Activated CD4-positive, alpha-beta memory T cell treated with anti-CD3 and anti-CD28 coated beads for 36 hours (primary cell): ENCODE measurements at regions of chr4 and their contacts with region 1.

Region 1: DNA sequence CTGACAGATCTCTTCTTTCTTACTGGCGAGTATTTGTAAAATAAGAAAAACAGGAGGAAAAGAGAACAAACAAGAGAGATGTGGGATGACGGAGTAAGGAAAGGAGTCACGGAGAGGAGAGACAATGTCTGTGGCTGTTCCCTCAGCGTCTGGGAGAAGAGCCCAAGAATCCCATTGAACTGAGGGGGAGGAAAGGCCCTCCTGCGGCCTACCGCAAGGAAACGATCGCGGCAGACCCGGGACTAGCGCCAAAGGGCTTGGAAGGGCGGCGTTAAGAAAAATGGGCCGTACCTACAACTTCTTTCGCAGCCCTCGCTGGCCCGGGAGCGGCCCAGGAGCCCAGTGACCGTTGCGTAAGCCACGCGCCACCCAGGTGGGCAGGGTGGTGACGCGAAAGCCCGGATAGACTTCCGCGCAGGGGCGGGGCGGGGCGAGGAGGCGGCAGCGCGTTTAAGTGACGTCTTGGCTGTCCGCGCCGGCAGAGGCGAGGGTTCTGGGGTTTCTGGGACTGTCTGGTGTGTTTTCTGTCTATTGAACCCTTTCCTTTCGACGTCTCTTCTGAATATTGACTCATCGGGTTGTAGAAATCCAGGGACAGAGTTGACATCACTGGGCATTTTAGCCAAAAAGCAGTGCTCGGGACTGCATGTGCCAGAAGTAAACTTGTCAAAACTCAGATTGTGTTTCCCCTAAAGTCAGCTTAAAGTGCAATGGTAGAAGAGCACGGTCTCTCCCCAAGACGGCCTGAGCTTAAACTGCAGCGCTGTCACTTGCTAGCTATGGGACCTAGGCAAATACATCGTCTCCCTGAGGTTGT is at the start of gene SLC9B1:
- DNase-seq: peak; percentile 97
- H3K4me3 Mint-ChIP-seq: peak within 1 kb of the TSS; percentile 84
- H3K27ac Mint-ChIP-seq: peak within 1 kb of the TSS; percentile 92
- H3K4me1 Mint-ChIP-seq: peaks cover 15% of the 10 kb centered on the region
- H3K27me3 Mint-ChIP-seq: no peaks in the 10 kb centered on the region
- total RNA-seq, gene SLC9B1: 1.9 to 2.4 TPM

Region 2: GRCh38 chr4:102180046-102180445 is 839.5 kb before region 1 on chr4:
- CTCF ChIA-PET with region 1: no interaction called
- POLR2A ChIA-PET with region 1: no interaction called
- intact Hi-C with region 1: no loop called
- DNase-seq: no peak
- H3K4me3 Mint-ChIP-seq: no peak overlapping the region
- H3K27ac Mint-ChIP-seq: no peak overlapping the region
- H3K4me1 Mint-ChIP-seq: no peaks in the 10 kb centered on the region
- H3K27me3 Mint-ChIP-seq: no peaks in the 10 kb centered on the region

Region 3: DNA sequence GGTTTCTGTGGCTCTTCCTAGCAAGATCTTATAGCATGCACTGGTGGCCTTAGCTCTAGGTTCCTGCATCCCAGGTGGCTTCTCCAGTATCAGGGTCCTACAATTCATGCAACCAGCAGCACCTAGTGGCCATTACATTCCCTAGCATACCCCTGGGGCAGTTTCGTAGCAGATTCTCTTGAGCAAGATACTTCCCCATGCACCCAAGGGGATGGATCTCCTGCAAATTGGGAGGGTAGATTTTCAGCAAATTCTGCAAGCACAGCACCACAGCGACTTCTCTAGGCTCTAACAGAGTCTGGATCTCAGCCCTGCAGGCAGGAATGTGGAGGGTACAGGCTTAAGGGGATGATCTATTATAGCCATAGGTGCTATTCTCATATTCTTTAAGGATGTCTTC is 13.1 kb after region 1 on chr4:
- CTCF ChIA-PET with region 1: no interaction called
- POLR2A ChIA-PET with region 1: no interaction called
- intact Hi-C with region 1: no loop called
- DNase-seq: no peak
- H3K4me3 Mint-ChIP-seq: no peak overlapping the region
- H3K27ac Mint-ChIP-seq: no peak overlapping the region
- H3K4me1 Mint-ChIP-seq: no peaks in the 10 kb centered on the region
- H3K27me3 Mint-ChIP-seq: no peaks in the 10 kb centered on the region

Region 4: DNA sequence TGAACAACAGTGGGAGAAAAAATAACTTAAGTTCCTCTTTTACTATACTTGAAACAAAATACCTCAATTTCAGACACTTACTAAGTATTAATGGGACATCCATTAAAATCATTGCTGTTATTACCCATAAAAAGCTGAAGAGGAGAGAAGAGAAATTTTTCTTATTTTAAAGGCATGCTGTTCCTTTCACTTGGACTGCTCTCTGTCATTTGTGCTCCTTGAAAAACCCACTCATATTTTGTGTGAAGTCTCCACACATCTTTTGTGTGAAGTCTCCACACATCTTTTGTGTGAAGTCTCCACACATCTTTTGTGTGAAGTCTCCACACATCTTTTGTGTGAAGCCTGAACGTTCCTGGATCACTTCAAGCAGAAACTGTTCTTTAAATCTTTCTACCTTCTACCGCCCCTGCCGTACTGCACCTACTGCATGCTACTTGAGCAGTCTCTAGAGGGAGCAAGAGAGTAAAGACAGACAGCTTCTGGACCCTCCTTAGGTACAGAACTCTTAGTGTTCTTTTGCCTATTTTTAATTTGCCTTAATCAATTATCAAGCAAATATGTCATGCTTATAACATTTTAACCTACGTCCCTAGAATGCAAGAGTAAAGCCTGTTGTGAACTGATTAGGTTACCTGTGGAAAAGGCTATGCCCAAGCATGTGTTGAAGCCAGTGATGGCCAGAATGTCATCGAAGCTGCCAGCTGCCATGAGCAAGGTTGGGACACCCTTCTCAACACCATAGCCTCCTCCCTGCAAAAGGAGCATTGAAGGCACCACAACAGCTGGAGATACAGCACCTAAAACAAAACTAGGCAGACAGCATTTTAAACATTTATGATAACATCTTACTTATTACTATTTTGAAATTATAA is 27.1 kb after region 1 on chr4:
- CTCF ChIA-PET with region 1: no interaction called
- POLR2A ChIA-PET with region 1: no interaction called
- intact Hi-C with region 1: loop called (anchors 1 kb)
- DNase-seq: peak; percentile 40
- H3K4me3 Mint-ChIP-seq: no peak overlapping the region
- H3K27ac Mint-ChIP-seq: no peak overlapping the region
- H3K4me1 Mint-ChIP-seq: peaks cover 10% of the 10 kb centered on the region
- H3K27me3 Mint-ChIP-seq: no peaks in the 10 kb centered on the region

Region 5: DNA sequence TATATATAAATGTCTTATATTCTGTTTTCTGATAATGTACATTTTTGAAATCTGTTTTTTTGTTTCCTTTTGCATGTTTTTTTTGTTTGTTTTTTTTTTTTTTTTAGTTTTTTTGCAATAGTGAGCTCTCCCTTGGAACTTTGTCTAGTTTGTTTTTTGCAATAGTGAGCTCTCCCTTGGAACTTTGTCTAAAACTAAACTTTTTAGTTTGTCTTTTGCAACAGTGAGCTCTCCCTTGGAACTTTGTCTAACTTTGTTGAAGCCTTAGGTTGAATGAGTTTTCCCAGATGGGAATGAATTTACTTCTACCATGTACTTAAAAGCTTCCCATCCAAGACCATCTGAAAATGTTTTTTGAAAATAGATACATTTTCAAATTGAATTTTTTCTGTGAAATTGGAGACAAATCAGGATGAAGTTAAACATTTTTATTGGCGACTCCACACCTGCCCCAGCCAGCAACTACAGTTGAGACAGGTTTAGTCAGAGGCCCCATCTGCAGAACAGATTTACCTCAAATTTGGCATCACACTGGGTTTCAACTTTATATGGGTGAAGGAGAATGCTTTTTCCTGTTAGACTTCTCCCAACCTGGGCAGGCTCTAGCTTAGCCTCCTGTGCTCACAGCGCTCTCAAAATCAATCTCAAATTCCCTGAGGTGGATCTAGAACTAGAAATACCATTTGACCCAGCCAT is 41.1 kb after region 1 on chr4:
- CTCF ChIA-PET with region 1: no interaction called
- POLR2A ChIA-PET with region 1: no interaction called
- intact Hi-C with region 1: no loop called
- DNase-seq: no peak
- H3K4me3 Mint-ChIP-seq: no peak overlapping the region
- H3K27ac Mint-ChIP-seq: no peak overlapping the region
- H3K4me1 Mint-ChIP-seq: no peaks in the 10 kb centered on the region
- H3K27me3 Mint-ChIP-seq: no peaks in the 10 kb centered on the region

Region 6: DNA sequence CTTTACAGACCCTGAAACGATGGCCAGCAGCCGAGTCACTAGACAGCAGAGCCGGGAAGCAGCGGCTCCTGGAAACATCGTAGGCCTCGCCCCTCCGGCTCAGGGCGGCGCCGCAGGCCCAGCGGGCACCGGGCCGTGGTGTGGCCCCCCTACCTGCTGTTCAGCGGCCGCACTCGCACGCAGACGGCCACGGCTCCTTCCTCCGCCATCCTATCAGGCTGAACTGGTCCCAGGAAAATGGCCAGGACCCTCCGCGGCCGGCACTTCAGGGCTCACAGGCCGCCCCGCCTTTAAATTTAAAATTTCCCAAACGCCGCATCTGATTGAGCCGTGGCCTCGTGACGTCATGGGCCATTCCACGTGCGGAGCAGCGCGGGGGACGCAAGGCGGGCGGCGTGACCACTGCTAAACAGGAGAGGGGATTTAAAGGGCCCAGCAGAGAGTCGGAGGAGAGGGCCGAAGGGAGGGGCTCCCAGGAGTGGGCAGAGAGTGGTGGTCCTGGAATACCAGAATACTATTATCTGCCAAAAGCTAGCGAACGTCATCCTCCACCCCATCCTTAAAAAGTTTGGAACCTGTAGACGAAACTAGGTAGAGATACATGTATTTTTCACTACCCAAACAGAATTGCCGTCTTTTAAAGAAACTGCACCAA is 178.7 kb after region 1 on chr4 and contains the start of gene CENPE:
- CTCF ChIA-PET with region 1: no interaction called
- POLR2A ChIA-PET with region 1: no interaction called
- intact Hi-C with region 1: loop called (anchors 2 kb)
- DNase-seq: peak; percentile 89
- H3K4me3 Mint-ChIP-seq: peak within 1 kb of the TSS; percentile 85
- H3K27ac Mint-ChIP-seq: peak within 1 kb of the TSS; percentile 86
- H3K4me1 Mint-ChIP-seq: peaks cover 12% of the 10 kb centered on the region
- H3K27me3 Mint-ChIP-seq: peaks cover 5% of the 10 kb centered on the region
- total RNA-seq, gene CENPE: 41.9 to 49.1 TPM

Region 7: DNA sequence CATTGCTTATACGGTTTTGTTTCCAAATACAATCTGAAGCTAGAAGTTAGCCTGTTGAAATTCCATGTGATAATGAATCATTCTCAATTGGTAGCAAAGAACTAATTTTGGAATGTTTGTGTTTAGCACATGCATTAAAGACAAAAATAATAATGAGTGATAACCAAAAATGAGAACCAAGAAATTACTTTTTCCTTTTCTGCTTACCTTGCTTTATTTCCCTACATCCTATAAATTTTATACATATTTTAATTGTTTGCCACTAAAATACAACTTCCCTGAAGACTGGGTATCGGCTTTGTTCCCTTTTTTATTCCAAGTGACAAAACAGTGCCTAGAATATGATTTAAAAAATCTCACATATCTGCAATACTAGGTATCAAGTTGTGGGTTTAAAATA is 904.0 kb after region 1 on chr4:
- CTCF ChIA-PET with region 1: no interaction called
- POLR2A ChIA-PET with region 1: no interaction called
- intact Hi-C with region 1: no loop called
- DNase-seq: no peak
- H3K4me3 Mint-ChIP-seq: no peak overlapping the region
- H3K27ac Mint-ChIP-seq: no peak overlapping the region
- H3K4me1 Mint-ChIP-seq: no peaks in the 10 kb centered on the region
- H3K27me3 Mint-ChIP-seq: no peaks in the 10 kb centered on the region